Aorta (tissue), 5 donors: ENCODE measurements at regions of chr18 and their contacts with region 1.

Region 1: GRCh38 chr18:63444567-63444966 is 22.3 kb upstream of the VPS4B start:
- DNase-seq: no peak
- ATAC-seq: peak; percentile 78
- H3K4me3 ChIP-seq: no peak overlapping the region
- H3K27ac ChIP-seq: no peak overlapping the region
- H3K4me1 ChIP-seq: no peaks in the 10 kb centered on the region
- H3K27me3 ChIP-seq: no peaks in the 10 kb centered on the region

Region 2: GRCh38 chr18:63016270-63016669 is 428.3 kb before region 1 on chr18:
- intact Hi-C with region 1: loop called (anchors 2 to 5 kb)
- DNase-seq: no peak
- ATAC-seq: peak; percentile 83
- H3K4me3 ChIP-seq: no peak overlapping the region
- H3K27ac ChIP-seq: no peak overlapping the region
- H3K4me1 ChIP-seq: no peaks in the 10 kb centered on the region
- H3K27me3 ChIP-seq: no peaks in the 10 kb centered on the region

Region 3: GRCh38 chr18:63487676-63488075 is 43.1 kb after region 1 on chr18:
- intact Hi-C with region 1: no loop called
- DNase-seq: no peak
- ATAC-seq: no peak
- H3K4me3 ChIP-seq: no peak overlapping the region
- H3K27ac ChIP-seq: no peak overlapping the region
- H3K4me1 ChIP-seq: no peaks in the 10 kb centered on the region
- H3K27me3 ChIP-seq: no peaks in the 10 kb centered on the region